Activated CD4-positive, alpha-beta T cell treated with anti-CD3 and anti-CD28 coated beads for 36 hours (primary cell): ENCODE measurements at regions of chr7 and their contacts with region 1.

Region 1: DNA sequence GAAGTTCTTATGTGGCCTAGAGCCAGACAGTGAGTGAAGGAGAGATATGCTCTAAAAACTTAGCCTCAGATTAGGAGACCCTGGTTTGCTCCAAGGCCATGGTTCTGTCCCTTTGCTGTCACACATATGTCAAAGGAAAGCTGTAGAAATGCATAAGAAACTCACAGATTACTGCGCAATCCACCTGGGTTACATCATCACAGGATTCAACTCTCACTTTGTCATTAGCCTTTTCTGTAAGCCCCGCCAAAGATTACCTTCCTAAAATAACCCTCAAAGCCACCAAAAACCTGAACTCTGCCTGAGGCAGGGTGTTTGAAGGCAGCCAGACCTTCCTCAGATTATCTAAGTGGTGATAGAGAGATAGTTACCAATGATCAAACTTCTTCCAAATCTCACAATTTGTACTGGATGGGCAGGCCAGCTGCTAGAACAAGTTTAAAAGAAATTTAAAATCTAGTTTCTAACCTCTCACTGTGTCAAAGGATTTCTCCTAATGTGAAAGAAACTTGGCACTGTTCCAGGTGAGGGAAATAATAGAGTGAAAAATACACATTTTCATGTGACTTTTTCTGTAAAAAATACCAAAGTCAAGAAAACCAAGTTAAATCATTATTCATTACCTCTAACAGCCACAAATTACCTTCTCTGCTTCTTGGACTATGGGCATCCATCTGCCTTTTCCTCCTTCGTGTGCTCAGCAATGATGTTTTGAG is 567.2 kb downstream of the SUGCT start:
- DNase-seq: peak; percentile 5
- ATAC-seq: no peak
- H3K4me3 Mint-ChIP-seq: no peak overlapping the region
- H3K27ac Mint-ChIP-seq: no peak overlapping the region
- H3K4me1 Mint-ChIP-seq: peaks cover 28% of the 10 kb centered on the region
- H3K27me3 Mint-ChIP-seq: no peaks in the 10 kb centered on the region

Region 2: GRCh38 chr7:39937366-39938153 is 764.4 kb before region 1 on chr7:
- CTCF ChIA-PET with region 1: no interaction called
- POLR2A ChIA-PET with region 1: interaction called, 14 read pairs
- intact Hi-C with region 1: no loop called
- DNase-seq: no peak
- ATAC-seq: no peak
- H3K4me3 Mint-ChIP-seq: no peak overlapping the region
- H3K27ac Mint-ChIP-seq: no peak overlapping the region
- H3K4me1 Mint-ChIP-seq: no peaks in the 10 kb centered on the region
- H3K27me3 Mint-ChIP-seq: no peaks in the 10 kb centered on the region

Region 3: DNA sequence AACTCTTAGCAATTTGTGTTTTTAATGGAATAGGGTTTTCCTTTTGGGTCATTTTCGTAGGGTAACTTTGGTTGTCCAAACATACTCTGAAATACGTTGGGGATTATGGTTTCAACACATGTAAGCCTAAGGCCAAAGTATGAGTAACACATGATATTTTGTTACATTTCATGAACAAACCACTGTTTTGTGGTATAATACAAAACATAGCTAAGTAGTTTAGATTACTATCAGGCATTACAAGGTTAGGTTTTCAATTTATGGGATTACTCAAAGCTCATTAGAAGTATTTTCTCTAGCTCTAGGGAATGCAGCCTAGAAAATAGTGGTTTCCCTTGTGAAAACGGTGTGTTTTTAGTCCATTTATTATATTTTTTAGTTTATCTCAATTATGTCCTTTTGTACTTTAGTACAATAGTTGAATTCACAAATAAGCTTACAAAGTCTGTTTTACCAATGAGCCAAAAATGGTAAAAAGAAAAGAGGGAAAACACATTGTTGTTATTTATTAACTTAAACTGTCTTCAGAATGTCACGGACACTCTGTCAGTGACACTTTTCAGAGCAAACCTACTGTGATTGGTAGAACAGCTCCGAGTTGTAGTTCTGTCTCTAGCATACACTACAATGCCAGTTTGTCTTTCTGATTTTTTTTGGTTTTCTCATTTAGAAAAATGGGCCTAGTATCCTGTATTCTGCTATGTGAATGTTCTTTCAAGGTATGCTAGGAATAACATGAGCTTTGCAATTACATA is 93.5 kb before region 1 on chr7:
- CTCF ChIA-PET with region 1: no interaction called
- POLR2A ChIA-PET with region 1: no interaction called
- intact Hi-C with region 1: no loop called
- DNase-seq: no peak
- ATAC-seq: no peak
- H3K4me3 Mint-ChIP-seq: no peak overlapping the region
- H3K27ac Mint-ChIP-seq: no peak overlapping the region
- H3K4me1 Mint-ChIP-seq: no peaks in the 10 kb centered on the region
- H3K27me3 Mint-ChIP-seq: no peaks in the 10 kb centered on the region